Endothelial cell of umbilical vein (primary cell): ENCODE measurements at regions of chr7 and their contacts with region 1.

Region 1: GRCh38 chr7:27130540-27131389 is at the start of gene HOXA4:
- DNase-seq: peak; percentile 89
- H3K4me3 ChIP-seq: peak within 1 kb of the TSS; percentile 36 to 60 (median 58)
- H3K27ac ChIP-seq: peak within 1 kb of the TSS; percentile 67
- H3K4me1 ChIP-seq: peaks cover 66% of the 10 kb centered on the region
- H3K27me3 ChIP-seq: no peaks in the 10 kb centered on the region
- CTCF ChIP-seq: no peak
- POLR2A ChIP-seq: peak; percentile 57
- total RNA-seq, gene HOXA4: 7.5 and 8.1 TPM in 2 replicates

Region 2: GRCh38 chr7:26853788-26854393 is 276.9 kb before region 1 on chr7:
- CTCF ChIA-PET with region 1: interaction called, 16 read pairs
- POLR2A ChIA-PET with region 1: no interaction called
- dilution Hi-C with region 1: no loop called
- intact Hi-C with region 1: no loop called
- DNase-seq: peak; percentile 69
- H3K4me3 ChIP-seq: no peak overlapping the region
- H3K27ac ChIP-seq: no peak overlapping the region
- H3K4me1 ChIP-seq: peaks cover 34% of the 10 kb centered on the region
- H3K27me3 ChIP-seq: no peaks in the 10 kb centered on the region
- CTCF ChIP-seq: peak; percentile 24 to 26
- POLR2A ChIP-seq: no peak

Region 3: GRCh38 chr7:27168265-27168947 is 37.6 kb after region 1 on chr7:
- CTCF ChIA-PET with region 1: no interaction called
- POLR2A ChIA-PET with region 1: no interaction called
- dilution Hi-C with region 1: no loop called
- intact Hi-C with region 1: no loop called
- DNase-seq: peak; percentile 84
- H3K4me3 ChIP-seq: peak overlapping the region; percentile 44 to 98 (median 63)
- H3K27ac ChIP-seq: peak overlapping the region; percentile 91
- H3K4me1 ChIP-seq: peaks cover 45% of the 10 kb centered on the region
- H3K27me3 ChIP-seq: no peaks in the 10 kb centered on the region
- CTCF ChIP-seq: peak in 1 of 2 donors; percentile 6
- POLR2A ChIP-seq: no peak

Region 4: GRCh38 chr7:27179503-27180430 is 49.0 kb after region 1 on chr7:
- CTCF ChIA-PET with region 1: interaction called, 13 read pairs
- POLR2A ChIA-PET with region 1: no interaction called
- dilution Hi-C with region 1: no loop called
- intact Hi-C with region 1: no loop called
- DNase-seq: peak; percentile 90
- H3K4me3 ChIP-seq: peak overlapping the region; percentile 53 to 94 (median 69)
- H3K27ac ChIP-seq: peak overlapping the region; percentile 96
- H3K4me1 ChIP-seq: peaks cover 65% of the 10 kb centered on the region
- H3K27me3 ChIP-seq: no peaks in the 10 kb centered on the region
- CTCF ChIP-seq: peak; percentile 93 to 97
- POLR2A ChIP-seq: no peak